A549 (cell line): ENCODE measurements at regions of chr5 and their contacts with region 1.

Region 1: GRCh38 chr5:77143998-77144836 is 57.1 kb upstream of the ZBED3 start:
- DNase-seq: peak; percentile 55 to 85
- ATAC-seq: peak; percentile 90 to 97
- H3K4me3 ChIP-seq: no peak overlapping the region
- H3K27ac ChIP-seq: peak overlapping the region; percentile 58 to 80
- H3K4me1 ChIP-seq: peaks cover 28% of the 10 kb centered on the region
- CTCF ChIP-seq: peak; percentile 90
- EP300 ChIP-seq: no peak
- POLR2A ChIP-seq: no peak
- RAD21 ChIP-seq: peak; percentile 95 to 97

Region 2: DNA sequence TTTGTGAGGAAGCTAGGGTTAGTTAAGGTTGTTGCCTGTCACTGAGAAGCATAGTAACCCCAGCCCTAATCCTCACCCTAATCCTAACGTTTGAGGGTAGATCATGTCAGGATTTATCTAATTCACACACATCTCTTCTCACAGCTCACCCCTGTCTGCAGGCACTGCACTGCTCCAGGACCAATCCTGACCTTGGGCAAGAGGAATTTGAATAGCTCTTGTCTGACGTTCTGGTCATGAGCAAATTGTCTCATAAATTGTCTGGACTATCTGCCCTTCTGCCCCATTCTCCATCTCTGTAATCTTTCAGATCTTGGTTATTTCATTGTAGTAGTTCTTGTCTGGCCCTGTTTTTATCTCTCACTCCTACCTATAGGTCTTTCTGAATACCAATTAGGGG is 172.7 kb before region 1 on chr5:
- CTCF ChIA-PET with region 1: no interaction called
- POLR2A ChIA-PET with region 1: no interaction called
- DNase-seq: no peak
- ATAC-seq: 0 out of 6 replicates have a peak, but pooled peaks of 1 of the 2 experiments have one; percentile 19
- H3K4me3 ChIP-seq: no peak overlapping the region
- H3K27ac ChIP-seq: no peak overlapping the region
- H3K4me1 ChIP-seq: no peaks in the 10 kb centered on the region
- CTCF ChIP-seq: no peak
- EP300 ChIP-seq: no peak
- POLR2A ChIP-seq: no peak
- RAD21 ChIP-seq: no peak

Region 3: DNA sequence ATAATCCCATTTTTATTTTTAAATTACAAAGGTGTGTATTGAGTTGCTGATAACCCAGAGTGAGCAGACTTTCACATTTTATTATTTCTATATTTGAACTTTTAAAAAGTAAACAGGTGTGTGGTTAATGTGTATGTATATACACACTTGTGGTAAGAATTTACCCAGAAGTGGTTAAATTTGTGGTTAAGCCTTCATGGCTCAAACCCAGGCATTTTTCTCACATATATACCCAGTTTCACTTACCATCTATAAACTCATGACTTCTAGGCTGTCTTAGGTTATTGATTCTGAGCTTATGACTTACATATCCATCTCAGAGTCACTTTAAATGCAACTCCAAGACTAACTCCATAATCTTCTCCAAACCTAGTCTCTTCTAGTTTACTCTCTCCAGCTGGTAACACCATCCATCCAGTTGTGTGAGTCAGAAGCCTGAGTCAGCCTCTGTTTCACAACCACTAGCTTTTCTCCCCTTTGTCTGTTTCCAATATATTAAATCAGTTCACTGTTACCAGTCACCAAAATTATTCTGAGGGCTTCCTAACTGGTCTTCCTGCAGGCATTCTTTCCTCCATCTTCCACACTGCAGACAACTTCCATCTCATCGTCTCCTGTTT is 77.3 kb before region 1 on chr5:
- CTCF ChIA-PET with region 1: no interaction called
- POLR2A ChIA-PET with region 1: no interaction called
- DNase-seq: no peak
- ATAC-seq: no peak
- H3K4me3 ChIP-seq: no peak overlapping the region
- H3K27ac ChIP-seq: no peak overlapping the region
- H3K4me1 ChIP-seq: no peaks in the 10 kb centered on the region
- CTCF ChIP-seq: no peak
- EP300 ChIP-seq: no peak
- POLR2A ChIP-seq: no peak
- RAD21 ChIP-seq: no peak

Region 4: DNA sequence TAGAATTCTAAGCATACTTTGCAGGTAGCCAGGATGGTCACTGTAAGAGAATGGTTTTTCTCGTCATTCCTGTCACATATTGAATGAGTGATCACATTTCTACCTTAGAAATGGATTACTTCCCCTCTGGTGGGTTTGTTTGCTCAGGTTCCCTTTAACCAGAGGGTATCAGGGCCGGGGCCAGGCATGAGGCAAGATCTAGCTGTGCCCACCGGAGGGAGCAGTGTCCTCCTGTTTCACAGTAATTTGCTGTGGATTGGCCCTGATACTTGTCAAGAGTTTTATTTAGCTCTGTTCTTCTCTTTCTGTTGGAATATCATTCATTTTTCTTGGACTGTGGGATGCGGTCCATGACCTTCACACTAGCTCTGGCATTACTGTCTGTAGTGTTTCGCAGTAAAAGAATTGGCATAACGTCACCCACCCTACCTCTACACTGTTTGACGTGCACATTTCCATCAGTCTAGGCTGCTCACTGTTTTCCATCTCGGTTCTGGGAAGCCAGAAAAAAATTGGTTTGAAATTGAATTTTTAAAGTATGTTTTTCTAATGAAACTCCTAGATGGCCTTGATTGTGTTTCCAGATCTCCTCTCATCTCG is 14.7 kb before region 1 on chr5:
- CTCF ChIA-PET with region 1: interaction called, 40 read pairs
- POLR2A ChIA-PET with region 1: no interaction called
- DNase-seq: peak; percentile 19 to 47
- ATAC-seq: peak; percentile 67 to 79; a peak in 5 of 6 replicates
- H3K4me3 ChIP-seq: no peak overlapping the region
- H3K27ac ChIP-seq: no peak overlapping the region
- H3K4me1 ChIP-seq: peaks cover 15% of the 10 kb centered on the region
- CTCF ChIP-seq: peak; percentile 49
- EP300 ChIP-seq: no peak
- POLR2A ChIP-seq: no peak
- RAD21 ChIP-seq: peak; percentile 61 to 62

Region 5: DNA sequence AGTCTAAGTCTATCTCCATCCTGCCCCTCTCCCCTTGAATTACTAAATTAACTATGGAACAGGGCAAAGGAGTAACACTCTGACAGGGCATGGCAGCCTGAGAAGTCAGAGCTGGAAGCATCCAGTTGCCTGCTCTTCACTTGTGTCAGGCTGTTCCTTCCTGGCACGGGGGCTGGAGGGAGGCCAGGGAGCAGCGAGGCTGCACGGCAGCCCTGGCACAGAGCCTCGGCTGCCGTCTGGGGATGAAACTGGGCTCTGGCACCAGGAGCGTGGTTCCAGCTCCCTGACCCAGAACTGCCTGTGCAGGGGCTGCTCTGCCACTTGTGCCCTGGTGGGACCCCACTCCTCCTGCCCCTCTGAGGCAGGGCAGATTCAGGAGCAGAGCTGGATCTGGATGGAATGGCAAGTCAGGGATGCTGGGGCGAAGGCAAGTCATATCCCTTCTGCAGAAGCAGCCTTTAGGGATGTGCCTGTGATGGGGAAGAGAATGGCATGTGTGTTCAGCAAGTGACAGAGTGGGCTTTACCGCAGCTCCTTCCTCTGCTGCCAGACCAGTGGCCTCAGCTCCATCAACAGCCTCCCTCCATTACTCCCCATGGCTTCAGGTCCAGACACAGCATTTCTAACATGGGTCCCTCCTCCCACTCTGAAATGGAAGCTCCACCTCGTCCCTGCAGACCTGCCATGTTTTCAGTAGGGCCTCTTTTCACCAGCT is 24.1 kb after region 1 on chr5:
- CTCF ChIA-PET with region 1: interaction called, 20 read pairs
- POLR2A ChIA-PET with region 1: no interaction called
- DNase-seq: peak; percentile 50 to 69
- ATAC-seq: peak; percentile 83 to 84
- H3K4me3 ChIP-seq: peak overlapping the region; percentile 8; the same call in 1 of the 3 replicates
- H3K27ac ChIP-seq: peak overlapping the region; percentile 91 to 96
- H3K4me1 ChIP-seq: peaks cover 57% of the 10 kb centered on the region
- CTCF ChIP-seq: no peak
- EP300 ChIP-seq: no peak; a peak in 1 of 5 replicates
- POLR2A ChIP-seq: no peak
- RAD21 ChIP-seq: no peak

Region 6: GRCh38 chr5:77239126-77239741 is 95.0 kb after region 1 on chr5:
- CTCF ChIA-PET with region 1: interaction called, 39 read pairs
- POLR2A ChIA-PET with region 1: no interaction called
- DNase-seq: peak; percentile 25 to 41
- ATAC-seq: peak; percentile 66 to 76; a peak in 5 of 6 replicates
- H3K4me3 ChIP-seq: no peak overlapping the region
- H3K27ac ChIP-seq: peak overlapping the region; percentile 1 to 42; a peak in 3 of 6 replicates
- H3K4me1 ChIP-seq: peaks cover 15% of the 10 kb centered on the region
- CTCF ChIP-seq: peak; percentile 64
- EP300 ChIP-seq: no peak
- POLR2A ChIP-seq: no peak
- RAD21 ChIP-seq: peak; percentile 58 to 64

Region 7: DNA sequence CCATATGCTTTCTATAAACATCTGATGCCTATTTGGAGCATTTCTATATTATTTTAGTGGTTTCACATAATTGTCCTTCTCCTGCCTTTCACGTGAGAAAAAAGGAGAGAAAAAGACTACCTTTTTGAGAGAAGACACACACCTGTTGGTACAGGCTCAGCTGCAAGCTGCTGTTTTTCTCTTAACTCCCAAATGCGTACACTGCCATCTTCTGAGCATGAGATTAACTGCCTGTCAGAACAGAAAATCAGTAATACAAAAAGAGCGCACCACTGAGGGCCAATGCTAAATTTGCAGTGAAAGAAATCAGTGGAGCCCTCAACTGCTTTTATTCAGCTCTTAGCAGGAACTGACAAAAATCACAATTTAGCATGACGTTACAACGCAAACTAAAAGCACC is 293.0 kb after region 1 on chr5:
- CTCF ChIA-PET with region 1: interaction called, 12 read pairs
- POLR2A ChIA-PET with region 1: no interaction called
- DNase-seq: peak in 1 of 2 experiments; percentile 43
- ATAC-seq: peak; percentile 39 to 65; a peak in 3 of 6 replicates
- H3K4me3 ChIP-seq: no peak overlapping the region
- H3K27ac ChIP-seq: no peak overlapping the region
- H3K4me1 ChIP-seq: no peaks in the 10 kb centered on the region
- CTCF ChIP-seq: peak; percentile 51
- EP300 ChIP-seq: no peak
- POLR2A ChIP-seq: no peak
- RAD21 ChIP-seq: peak; percentile 54 to 60